ENCODE measurements at regions of chr10 and their contacts with region 1.

Region 1: GRCh38 chr10:69506834-69507721 is 55.8 kb downstream of the TSPAN15 start:
- DNase-seq: no peak
- ATAC-seq: no peak
- H3K4me3 Mint-ChIP-seq: peak overlapping the region; percentile 58
- H3K27ac Mint-ChIP-seq: peak overlapping the region; percentile 53
- H3K4me1 Mint-ChIP-seq: peaks cover 10% of the 10 kb centered on the region
- H3K27me3 Mint-ChIP-seq: peaks cover 22% of the 10 kb centered on the region

Region 2: GRCh38 chr10:69425511-69426298 is 81.4 kb before region 1 on chr10:
- CTCF ChIA-PET with region 1: interaction called, 17 read pairs
- DNase-seq: no peak
- ATAC-seq: peak; percentile 28
- H3K4me3 Mint-ChIP-seq: no peak overlapping the region
- H3K27ac Mint-ChIP-seq: no peak overlapping the region
- H3K4me1 Mint-ChIP-seq: peaks cover 40% of the 10 kb centered on the region
- H3K27me3 Mint-ChIP-seq: no peaks in the 10 kb centered on the region

Region 3: DNA sequence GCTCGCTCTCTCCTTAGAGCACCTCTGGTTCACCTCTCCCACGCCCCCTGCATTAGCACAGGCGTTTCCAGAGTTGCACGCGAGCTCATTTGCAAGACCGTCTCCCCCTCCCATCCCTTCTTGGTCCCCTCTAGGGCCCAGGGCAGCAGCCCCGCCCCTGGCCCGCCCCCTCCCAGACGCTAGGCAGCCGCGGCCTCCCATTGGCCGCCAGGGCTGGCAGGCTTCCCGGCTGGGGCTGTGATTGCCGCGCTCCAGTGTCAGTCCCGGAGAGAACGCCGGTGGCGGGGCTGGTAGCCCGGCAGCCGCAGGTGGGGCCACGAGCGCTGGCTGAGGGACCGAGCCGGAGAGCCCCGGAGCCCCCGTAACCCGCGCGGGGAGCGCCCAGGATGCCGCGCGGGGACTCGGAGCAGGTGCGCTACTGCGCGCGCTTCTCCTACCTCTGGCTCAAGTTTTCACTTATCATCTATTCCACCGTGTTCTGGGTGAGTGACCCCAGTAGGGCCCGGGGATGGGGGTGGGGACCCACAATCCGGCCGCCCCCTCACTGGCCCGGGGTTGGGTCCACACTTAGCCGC is 55.8 kb before region 1 on chr10 and contains the start of gene TSPAN15:
- CTCF ChIA-PET with region 1: interaction called, 23 read pairs
- DNase-seq: peak; percentile 84
- ATAC-seq: peak; percentile 94
- H3K4me3 Mint-ChIP-seq: peak within 1 kb of the TSS; percentile 73
- H3K27ac Mint-ChIP-seq: no peak within 1 kb of the TSS
- H3K4me1 Mint-ChIP-seq: peaks cover 28% of the 10 kb centered on the region
- H3K27me3 Mint-ChIP-seq: peaks cover 17% of the 10 kb centered on the region
- total RNA-seq, gene TSPAN15: 2.5 to 4.2 TPM

Region 4: GRCh38 chr10:69464801-69465401 is 42.2 kb before region 1 on chr10:
- CTCF ChIA-PET with region 1: interaction called, 11 read pairs
- DNase-seq: peak; percentile 51
- ATAC-seq: peak; percentile 61
- H3K4me3 Mint-ChIP-seq: no peak overlapping the region
- H3K27ac Mint-ChIP-seq: peak overlapping the region; percentile 88
- H3K4me1 Mint-ChIP-seq: peaks cover 53% of the 10 kb centered on the region
- H3K27me3 Mint-ChIP-seq: no peaks in the 10 kb centered on the region

Measured in activated CD8-positive, alpha-beta memory T cell treated with anti-CD3 and anti-CD28 coated beads, Interleukin-2, amount 10 ng/mL, durations not matched to agents 7 days and 5 days (primary cell).